Esophagus muscularis mucosa (tissue), 4 donors: ENCODE measurements at regions of chr1 and their contacts with region 1.

Region 1: GRCh38 chr1:119008483-119009311 is 20.6 kb upstream of the TBX15 start:
- DNase-seq: no peak
- H3K4me3 ChIP-seq: peak overlapping the region; percentile 39 to 52 (median 44)
- H3K27ac ChIP-seq: no peak overlapping the region
- H3K4me1 ChIP-seq: peaks cover 21 to 35% (median 33%) of the 10 kb centered on the region in 4 donors
- H3K27me3 ChIP-seq: peaks cover 0 to 62% (median 35%) of the 10 kb centered on the region in 4 donors
- CTCF ChIP-seq: peak; percentile 58 to 72 (median 61)
- EP300 ChIP-seq: no peak
- POLR2A ChIP-seq: no peak

Region 2: GRCh38 chr1:118223426-118223825 is 785.3 kb before region 1 on chr1:
- intact Hi-C with region 1: loop called (anchors 5 kb)
- DNase-seq: no peak
- H3K4me3 ChIP-seq: no peak overlapping the region
- H3K27ac ChIP-seq: no peak overlapping the region
- H3K4me1 ChIP-seq: no peaks in the 10 kb centered on the region
- H3K27me3 ChIP-seq: no peaks in the 10 kb centered on the region
- CTCF ChIP-seq: peak; percentile 29 to 47 (median 33)
- EP300 ChIP-seq: no peak
- POLR2A ChIP-seq: no peak

Region 3: GRCh38 chr1:118902711-118903191 is 105.9 kb before region 1 on chr1:
- intact Hi-C with region 1: no loop called
- DNase-seq: peak; percentile 62
- H3K4me3 ChIP-seq: no peak overlapping the region
- H3K27ac ChIP-seq: no peak overlapping the region
- H3K4me1 ChIP-seq: no peaks in the 10 kb centered on the region
- H3K27me3 ChIP-seq: no peaks in the 10 kb centered on the region
- CTCF ChIP-seq: no peak
- EP300 ChIP-seq: no peak
- POLR2A ChIP-seq: no peak

Region 4: GRCh38 chr1:119040906-119041305 is 32.2 kb after region 1 on chr1:
- intact Hi-C with region 1: no loop called
- DNase-seq: no peak
- H3K4me3 ChIP-seq: no peak overlapping the region
- H3K27ac ChIP-seq: no peak overlapping the region
- H3K4me1 ChIP-seq: no peaks in the 10 kb centered on the region
- H3K27me3 ChIP-seq: no peaks in the 10 kb centered on the region
- CTCF ChIP-seq: no peak
- EP300 ChIP-seq: no peak
- POLR2A ChIP-seq: no peak

Region 5: GRCh38 chr1:119160866-119161265 is 152.2 kb after region 1 on chr1:
- intact Hi-C with region 1: no loop called
- DNase-seq: no peak
- H3K4me3 ChIP-seq: no peak overlapping the region
- H3K27ac ChIP-seq: no peak overlapping the region
- H3K4me1 ChIP-seq: peaks cover 0 to 5% (median 0%) of the 10 kb centered on the region in 4 donors
- H3K27me3 ChIP-seq: no peaks in the 10 kb centered on the region
- CTCF ChIP-seq: no peak
- EP300 ChIP-seq: no peak
- POLR2A ChIP-seq: no peak